ENCODE measurements at regions of chr15 and their contacts with region 1.

Region 1: GRCh38 chr15:66497502-66498455 is at the start of gene SNAPC5:
- DNase-seq: peak; percentile 94 to 100
- H3K4me3 ChIP-seq: peak within 1 kb of the TSS; percentile 56 to 88 (median 67)
- H3K27ac ChIP-seq: peak within 1 kb of the TSS; percentile 88
- H3K4me1 ChIP-seq: peaks cover 5 to 8% (median 6%) of the 10 kb centered on the region in 4 experiments; a peak in 5 of 7 replicates
- H3K27me3 ChIP-seq: no peaks in the 10 kb centered on the region
- CTCF ChIP-seq: peak; percentile 78 to 93 (median 90)
- EP300 ChIP-seq: no peak; a peak in 1 of 3 replicates
- POLR2A ChIP-seq: peak; percentile 57 to 91
- RAD21 ChIP-seq: peak; percentile 29 to 56; a peak in 3 of 4 replicates
- total RNA-seq, gene SNAPC5: 21.5 and 23.1 TPM in 2 replicates

Region 2: DNA sequence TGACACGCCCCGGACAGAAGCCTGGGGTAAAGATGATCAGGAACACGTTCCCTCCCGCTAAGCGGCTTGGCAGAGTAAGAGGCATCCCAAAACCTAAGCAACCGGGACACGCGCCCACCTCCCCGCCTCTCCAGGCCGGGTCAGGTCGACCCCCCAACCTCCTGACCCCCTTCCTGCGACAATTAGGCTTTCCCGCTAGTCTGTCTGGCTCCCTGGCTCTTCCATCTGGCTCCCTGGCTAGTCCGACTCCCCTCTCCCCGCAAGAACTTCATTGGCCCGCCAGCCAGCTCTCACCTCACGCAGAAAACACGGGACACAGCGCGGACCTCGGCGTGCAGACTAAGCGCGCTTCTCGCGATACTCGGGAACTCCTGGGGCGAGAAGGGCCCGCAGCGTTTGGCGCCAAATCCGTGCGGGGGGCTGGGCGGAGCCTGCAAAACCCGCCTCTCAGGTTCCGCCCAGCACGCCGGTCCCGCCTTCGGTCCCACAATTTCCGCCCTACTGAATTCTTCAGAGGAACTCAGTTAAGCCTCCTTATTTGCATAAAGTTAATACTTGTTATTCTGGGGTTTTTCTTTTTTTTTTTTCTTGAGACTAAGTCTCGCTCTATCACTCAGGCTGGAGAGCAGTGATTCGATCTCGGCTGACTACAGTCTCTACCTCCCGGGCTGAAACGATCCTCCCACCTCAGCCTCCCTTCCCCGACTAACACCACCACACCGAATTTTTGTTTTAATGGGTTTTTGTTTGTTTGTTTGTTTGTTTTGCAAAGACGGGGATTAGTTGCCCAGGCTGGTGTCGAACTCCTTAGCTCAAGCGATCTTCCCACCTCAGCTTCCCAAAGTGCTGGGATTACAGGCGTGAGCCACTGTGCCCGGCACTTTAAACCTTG is 141.2 kb before region 1 on chr15 and contains the start of gene TIPIN:
- CTCF ChIA-PET with region 1: interaction called, 5 read pairs
- POLR2A ChIA-PET with region 1: interaction called, 12 read pairs
- DNase-seq: peak; percentile 84 to 96
- H3K4me3 ChIP-seq: peak within 1 kb of the TSS; percentile 72 to 87 (median 82)
- H3K27ac ChIP-seq: peak within 1 kb of the TSS; percentile 78
- H3K4me1 ChIP-seq: peaks cover 0 to 7% (median 3%) of the 10 kb centered on the region in 4 experiments; a peak in 5 of 7 replicates
- H3K27me3 ChIP-seq: no peaks in the 10 kb centered on the region
- CTCF ChIP-seq: no peak
- EP300 ChIP-seq: no peak
- POLR2A ChIP-seq: peak in 1 of 2 experiments; percentile 90; a peak in 2 of 3 replicates
- RAD21 ChIP-seq: no peak
- total RNA-seq, gene TIPIN: 23.5 and 24.7 TPM in 2 replicates

Region 3: GRCh38 chr15:66394915-66395314 is 102.9 kb before region 1 on chr15:
- CTCF ChIA-PET with region 1: interaction called, 18 read pairs
- POLR2A ChIA-PET with region 1: interaction called, 64 read pairs
- DNase-seq: no peak
- H3K4me3 ChIP-seq: no peak overlapping the region
- H3K27ac ChIP-seq: no peak overlapping the region
- H3K4me1 ChIP-seq: no peaks in the 10 kb centered on the region
- H3K27me3 ChIP-seq: no peaks in the 10 kb centered on the region
- CTCF ChIP-seq: no peak
- EP300 ChIP-seq: no peak
- POLR2A ChIP-seq: no peak
- RAD21 ChIP-seq: no peak

Region 4: GRCh38 chr15:66433726-66434125 is 64.1 kb before region 1 on chr15:
- CTCF ChIA-PET with region 1: interaction called, 6 read pairs
- POLR2A ChIA-PET with region 1: interaction called, 11 read pairs
- DNase-seq: no peak
- H3K4me3 ChIP-seq: no peak overlapping the region
- H3K27ac ChIP-seq: no peak overlapping the region; the same call in 1 of the 2 replicates
- H3K4me1 ChIP-seq: peaks cover 0 to 14% (median 0%) of the 10 kb centered on the region in 4 experiments; a peak in 1 of 7 replicates
- H3K27me3 ChIP-seq: no peaks in the 10 kb centered on the region
- CTCF ChIP-seq: no peak
- EP300 ChIP-seq: no peak
- POLR2A ChIP-seq: no peak
- RAD21 ChIP-seq: no peak

Region 5: DNA sequence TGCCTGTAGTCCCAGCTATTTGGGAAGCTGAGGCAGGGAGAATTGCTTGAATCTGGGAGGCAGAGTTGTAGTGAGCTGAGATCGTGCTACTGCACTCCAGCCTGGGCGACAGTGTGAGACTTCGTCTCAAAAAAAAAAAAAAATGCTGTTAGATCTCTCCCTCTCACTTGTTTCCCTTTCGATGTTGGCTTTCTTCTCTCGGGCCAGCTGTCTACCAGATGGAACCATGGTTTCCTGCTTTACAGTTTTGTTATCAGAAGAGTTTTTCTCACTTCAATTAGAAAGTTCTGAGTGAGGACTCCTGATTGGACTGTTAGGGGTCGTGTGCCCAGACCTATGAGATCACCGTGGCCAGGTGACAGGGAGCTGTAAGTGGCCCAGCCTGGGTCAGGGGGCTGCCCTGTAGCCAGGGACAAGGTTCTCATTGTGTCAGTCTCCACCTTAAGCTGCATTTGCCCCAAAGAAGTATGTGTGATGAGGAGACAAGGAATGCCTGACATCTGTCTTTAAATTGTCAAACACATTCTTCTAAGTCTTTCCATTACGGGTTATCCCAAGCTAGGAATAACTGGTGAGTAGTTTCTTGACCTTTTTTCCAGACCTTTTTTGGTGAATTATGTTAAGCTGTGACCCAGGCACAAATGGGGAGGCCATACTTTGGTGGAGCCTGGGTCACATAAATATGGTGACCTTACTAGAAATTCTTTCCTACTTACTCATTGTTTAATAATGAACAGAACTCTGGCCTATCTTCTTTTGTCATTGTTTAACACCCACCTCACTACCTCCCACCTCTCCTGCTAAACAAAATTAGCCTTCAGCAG is 25.4 kb before region 1 on chr15:
- CTCF ChIA-PET with region 1: interaction called, 40 read pairs
- POLR2A ChIA-PET with region 1: interaction called, 24 read pairs
- DNase-seq: no peak
- H3K4me3 ChIP-seq: peak overlapping the region in 1 of 4 experiments; percentile 0; a peak in 1 of 8 replicates
- H3K27ac ChIP-seq: peak overlapping the region; percentile 62; the same call in 1 of the 2 replicates
- H3K4me1 ChIP-seq: peaks cover 23 to 57% (median 44%) of the 10 kb centered on the region in 4 experiments
- H3K27me3 ChIP-seq: no peaks in the 10 kb centered on the region
- CTCF ChIP-seq: no peak
- EP300 ChIP-seq: no peak
- POLR2A ChIP-seq: no peak
- RAD21 ChIP-seq: no peak

Region 6: DNA sequence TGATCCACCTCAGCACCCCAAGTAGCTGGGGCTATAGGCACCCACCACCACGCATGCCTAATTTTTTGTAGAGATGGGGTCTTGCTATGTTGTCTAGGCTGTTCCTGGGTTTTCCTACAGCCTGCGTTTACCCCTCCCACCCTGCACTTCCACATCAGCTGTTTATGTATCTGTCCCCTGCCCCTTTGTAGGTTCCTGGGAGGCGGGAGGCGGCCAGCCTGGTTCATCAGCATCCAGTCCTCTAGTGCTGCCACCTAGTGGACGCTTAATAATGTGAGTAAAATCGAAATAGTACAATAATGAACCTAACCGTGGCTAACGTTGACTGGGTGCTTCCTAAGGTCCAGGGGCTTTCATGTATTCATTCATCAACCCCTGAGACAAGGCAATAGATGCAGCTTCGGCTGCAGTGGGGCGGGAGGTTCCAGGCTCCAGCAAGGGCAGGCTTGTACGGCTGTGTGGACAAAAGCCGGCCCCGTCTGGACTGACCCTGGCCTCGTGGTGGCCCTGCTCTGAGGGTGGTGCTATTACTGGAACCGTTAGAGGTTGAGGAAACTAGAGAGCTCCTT is 69.3 kb after region 1 on chr15:
- CTCF ChIA-PET with region 1: interaction called, 7 read pairs
- POLR2A ChIA-PET with region 1: interaction called, 38 read pairs
- DNase-seq: peak; percentile 53 to 80
- H3K4me3 ChIP-seq: no peak overlapping the region
- H3K27ac ChIP-seq: no peak overlapping the region
- H3K4me1 ChIP-seq: peaks cover 4 to 22% (median 17%) of the 10 kb centered on the region in 4 experiments
- H3K27me3 ChIP-seq: no peaks in the 10 kb centered on the region
- CTCF ChIP-seq: peak; percentile 33 to 75 (median 58)
- EP300 ChIP-seq: peak in 1 of 2 experiments; percentile 33; a peak in 1 of 3 replicates
- POLR2A ChIP-seq: no peak
- RAD21 ChIP-seq: peak; percentile 37 to 59

Measured in H1 (cell line).